ENCODE measurements at regions of chr3 and their contacts with region 1.

Region 1: GRCh38 chr3:184185461-184186308 is at the start of gene ABCF3:
- DNase-seq: peak; percentile 98
- H3K4me3 ChIP-seq: peak within 1 kb of the TSS; percentile 44 to 95 (median 71)
- H3K27ac ChIP-seq: peak within 1 kb of the TSS; percentile 54
- H3K4me1 ChIP-seq: peaks cover 19% of the 10 kb centered on the region
- H3K27me3 ChIP-seq: no peaks in the 10 kb centered on the region
- CTCF ChIP-seq: no peak
- total RNA-seq, gene ABCF3: 50.8 to 58.2 TPM

Region 2: GRCh38 chr3:184145111-184145524 is 40.6 kb before region 1 on chr3:
- CTCF ChIA-PET with region 1: no interaction called
- dilution Hi-C with region 1: no loop called
- in situ Hi-C with region 1: no loop called
- intact Hi-C with region 1: loop called (anchors 5 kb)
- DNase-seq: peak; percentile 67
- H3K4me3 ChIP-seq: no peak overlapping the region
- H3K27ac ChIP-seq: no peak overlapping the region
- H3K4me1 ChIP-seq: no peaks in the 10 kb centered on the region
- H3K27me3 ChIP-seq: no peaks in the 10 kb centered on the region
- CTCF ChIP-seq: peak; percentile 74 to 80

Region 3: GRCh38 chr3:184154885-184155643 is 30.6 kb before region 1 on chr3 and contains the start of gene DVL3:
- CTCF ChIA-PET with region 1: no interaction called
- dilution Hi-C with region 1: no loop called
- in situ Hi-C with region 1: no loop called
- intact Hi-C with region 1: loop called (anchors 1 kb)
- DNase-seq: peak; percentile 64
- H3K4me3 ChIP-seq: peak within 1 kb of the TSS; percentile 66 to 88 (median 86)
- H3K27ac ChIP-seq: peak within 1 kb of the TSS; percentile 14
- H3K4me1 ChIP-seq: peaks cover 12% of the 10 kb centered on the region
- H3K27me3 ChIP-seq: no peaks in the 10 kb centered on the region
- CTCF ChIP-seq: no peak
- total RNA-seq, gene DVL3: 35.2 to 58.7 TPM

Region 4: GRCh38 chr3:184174646-184175492 is 10.8 kb before region 1 on chr3 and contains the start of gene AP2M1:
- CTCF ChIA-PET with region 1: interaction called, 15 read pairs
- dilution Hi-C with region 1: no loop called
- in situ Hi-C with region 1: no loop called
- intact Hi-C with region 1: no loop called
- DNase-seq: peak; percentile 98
- H3K4me3 ChIP-seq: peak within 1 kb of the TSS; percentile 78 to 99 (median 82)
- H3K27ac ChIP-seq: peak within 1 kb of the TSS; percentile 53
- H3K4me1 ChIP-seq: peaks cover 29% of the 10 kb centered on the region
- H3K27me3 ChIP-seq: no peaks in the 10 kb centered on the region
- CTCF ChIP-seq: peak in 1 of 2 donors; percentile 10
- total RNA-seq, gene AP2M1: 291 to 348 TPM